Activated CD4-positive, alpha-beta memory T cell treated with anti-CD3 and anti-CD28 coated beads for 36 hours (primary cell): ENCODE measurements at regions of chr4 and their contacts with region 1.

Region 1: DNA sequence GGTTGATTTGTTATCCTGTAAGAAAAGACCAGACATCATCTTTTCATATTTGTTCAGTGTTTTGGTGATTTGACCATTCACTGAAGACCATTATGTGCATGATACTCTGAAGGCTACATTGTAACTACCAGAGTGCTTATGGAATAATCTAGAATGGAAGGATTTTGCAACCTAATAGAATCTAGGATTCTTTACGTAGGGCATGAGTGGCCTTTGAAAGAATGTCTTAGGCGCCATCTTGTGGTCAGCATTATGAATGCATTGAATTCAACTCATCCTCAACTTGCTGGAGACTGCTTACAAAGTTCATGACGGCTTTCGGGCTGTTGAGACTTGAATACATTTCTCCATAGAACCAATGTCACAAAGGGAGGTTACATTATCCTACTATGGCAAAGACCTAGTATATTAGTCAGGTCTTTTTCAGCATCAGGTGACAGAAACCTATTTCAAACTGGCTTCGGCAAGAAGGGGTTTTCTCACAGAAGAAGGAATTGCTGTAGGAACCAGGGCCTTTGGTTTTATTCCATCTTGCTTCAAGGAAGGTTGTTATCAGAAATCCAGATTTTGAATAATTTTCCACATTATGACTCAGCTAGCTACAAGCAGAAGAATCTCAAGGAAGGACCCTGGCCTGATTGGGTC is 104.1 kb downstream of the GPAT3 start:
- DNase-seq: peak; percentile 48
- H3K4me3 Mint-ChIP-seq: no peak overlapping the region
- H3K27ac Mint-ChIP-seq: no peak overlapping the region
- H3K4me1 Mint-ChIP-seq: peaks cover 3% of the 10 kb centered on the region
- H3K27me3 Mint-ChIP-seq: peaks cover 1% of the 10 kb centered on the region

Region 2: GRCh38 chr4:83490876-83491450 is 149.0 kb before region 1 on chr4:
- CTCF ChIA-PET with region 1: interaction called, 29 read pairs
- POLR2A ChIA-PET with region 1: no interaction called
- intact Hi-C with region 1: loop called (anchors 1 kb)
- DNase-seq: no peak
- H3K4me3 Mint-ChIP-seq: no peak overlapping the region
- H3K27ac Mint-ChIP-seq: no peak overlapping the region
- H3K4me1 Mint-ChIP-seq: peaks cover 4% of the 10 kb centered on the region
- H3K27me3 Mint-ChIP-seq: no peaks in the 10 kb centered on the region

Region 3: GRCh38 chr4:83510442-83510841 is 129.5 kb before region 1 on chr4:
- CTCF ChIA-PET with region 1: interaction called, 124 read pairs
- POLR2A ChIA-PET with region 1: no interaction called
- intact Hi-C with region 1: loop called (anchors 1 kb)
- DNase-seq: no peak
- H3K4me3 Mint-ChIP-seq: no peak overlapping the region
- H3K27ac Mint-ChIP-seq: no peak overlapping the region
- H3K4me1 Mint-ChIP-seq: no peaks in the 10 kb centered on the region
- H3K27me3 Mint-ChIP-seq: no peaks in the 10 kb centered on the region

Region 4: GRCh38 chr4:83866571-83867227 is 226.7 kb after region 1 on chr4:
- CTCF ChIA-PET with region 1: no interaction called
- POLR2A ChIA-PET with region 1: no interaction called
- intact Hi-C with region 1: loop called (anchors 10 kb)
- DNase-seq: no peak
- H3K4me3 Mint-ChIP-seq: no peak overlapping the region
- H3K27ac Mint-ChIP-seq: no peak overlapping the region
- H3K4me1 Mint-ChIP-seq: no peaks in the 10 kb centered on the region
- H3K27me3 Mint-ChIP-seq: no peaks in the 10 kb centered on the region

Region 5: GRCh38 chr4:84503495-84504437 is 863.8 kb after region 1 on chr4:
- CTCF ChIA-PET with region 1: interaction called, 3 read pairs
- POLR2A ChIA-PET with region 1: no interaction called
- intact Hi-C with region 1: loop called (anchors 1 kb)
- DNase-seq: no peak
- H3K4me3 Mint-ChIP-seq: no peak overlapping the region
- H3K27ac Mint-ChIP-seq: no peak overlapping the region
- H3K4me1 Mint-ChIP-seq: peaks cover 3% of the 10 kb centered on the region
- H3K27me3 Mint-ChIP-seq: peaks cover 79% of the 10 kb centered on the region